ENCODE measurements at regions of chr3 and their contacts with region 1.

Region 1: GRCh38 chr3:115239717-115240116 is 92.6 kb upstream of the ZBTB20 start:
- DNase-seq: peak in 2 of 5 donors; percentile 10 to 36
- H3K4me3 ChIP-seq: no peak overlapping the region
- H3K27ac ChIP-seq: no peak overlapping the region
- H3K4me1 ChIP-seq: no peaks in the 10 kb centered on the region
- H3K27me3 ChIP-seq: no peaks in the 10 kb centered on the region
- CTCF ChIP-seq: no peak
- EP300 ChIP-seq: no peak
- POLR2A ChIP-seq: no peak

Region 2: DNA sequence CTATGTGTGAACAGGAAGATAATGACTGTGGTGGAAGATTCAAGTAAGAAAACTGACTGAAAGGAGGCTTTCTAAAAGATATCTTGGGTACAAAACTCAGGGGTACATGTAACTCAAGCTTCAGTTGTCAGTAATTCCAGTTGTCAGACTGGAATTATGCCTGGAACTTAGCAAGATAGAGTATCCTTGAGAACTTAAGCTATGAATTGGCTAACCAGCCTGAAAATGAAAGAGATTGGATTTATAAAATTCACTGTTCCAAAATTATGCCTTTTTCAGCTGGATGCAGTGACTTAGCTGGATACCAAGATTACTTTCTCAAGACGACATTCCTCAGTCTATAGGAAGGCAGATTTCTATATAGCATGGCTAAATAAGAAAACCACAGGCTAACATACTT is 129.3 kb after region 1 on chr3:
- intact Hi-C with region 1: no loop called
- DNase-seq: no peak
- H3K4me3 ChIP-seq: no peak overlapping the region
- H3K27ac ChIP-seq: no peak overlapping the region
- H3K4me1 ChIP-seq: no peaks in the 10 kb centered on the region
- H3K27me3 ChIP-seq: no peaks in the 10 kb centered on the region
- CTCF ChIP-seq: no peak
- EP300 ChIP-seq: no peak
- POLR2A ChIP-seq: no peak

Region 3: DNA sequence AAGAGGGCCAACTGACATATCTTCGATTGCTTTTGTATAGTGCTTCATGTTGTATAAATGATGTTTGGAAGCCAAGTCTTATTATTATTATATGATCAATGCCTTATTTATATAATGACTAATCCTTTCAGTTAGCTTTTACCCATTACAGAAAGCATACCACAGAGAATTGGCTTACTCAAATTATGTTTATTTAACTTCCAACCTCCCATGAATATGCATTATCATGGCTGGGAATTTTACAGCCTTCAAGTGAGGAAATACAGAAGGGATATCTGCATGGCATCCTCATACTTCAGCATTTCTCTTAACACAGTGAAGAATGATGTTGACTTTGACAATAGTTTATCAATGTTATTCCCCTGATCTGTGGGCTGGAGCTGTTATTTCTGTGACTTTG is 157.7 kb after region 1 on chr3:
- intact Hi-C with region 1: loop called in 1 of 4 experiments (anchors 10 kb)
- DNase-seq: no peak
- H3K4me3 ChIP-seq: no peak overlapping the region
- H3K27ac ChIP-seq: no peak overlapping the region
- H3K4me1 ChIP-seq: peaks cover 5% of the 10 kb centered on the region
- H3K27me3 ChIP-seq: no peaks in the 10 kb centered on the region
- CTCF ChIP-seq: no peak
- EP300 ChIP-seq: no peak
- POLR2A ChIP-seq: no peak

Measured in ovary (tissue), 10 donors.